CD8-positive, alpha-beta T cell (primary cell): ENCODE measurements at regions of chr7 and their contacts with region 1.

Region 1: DNA sequence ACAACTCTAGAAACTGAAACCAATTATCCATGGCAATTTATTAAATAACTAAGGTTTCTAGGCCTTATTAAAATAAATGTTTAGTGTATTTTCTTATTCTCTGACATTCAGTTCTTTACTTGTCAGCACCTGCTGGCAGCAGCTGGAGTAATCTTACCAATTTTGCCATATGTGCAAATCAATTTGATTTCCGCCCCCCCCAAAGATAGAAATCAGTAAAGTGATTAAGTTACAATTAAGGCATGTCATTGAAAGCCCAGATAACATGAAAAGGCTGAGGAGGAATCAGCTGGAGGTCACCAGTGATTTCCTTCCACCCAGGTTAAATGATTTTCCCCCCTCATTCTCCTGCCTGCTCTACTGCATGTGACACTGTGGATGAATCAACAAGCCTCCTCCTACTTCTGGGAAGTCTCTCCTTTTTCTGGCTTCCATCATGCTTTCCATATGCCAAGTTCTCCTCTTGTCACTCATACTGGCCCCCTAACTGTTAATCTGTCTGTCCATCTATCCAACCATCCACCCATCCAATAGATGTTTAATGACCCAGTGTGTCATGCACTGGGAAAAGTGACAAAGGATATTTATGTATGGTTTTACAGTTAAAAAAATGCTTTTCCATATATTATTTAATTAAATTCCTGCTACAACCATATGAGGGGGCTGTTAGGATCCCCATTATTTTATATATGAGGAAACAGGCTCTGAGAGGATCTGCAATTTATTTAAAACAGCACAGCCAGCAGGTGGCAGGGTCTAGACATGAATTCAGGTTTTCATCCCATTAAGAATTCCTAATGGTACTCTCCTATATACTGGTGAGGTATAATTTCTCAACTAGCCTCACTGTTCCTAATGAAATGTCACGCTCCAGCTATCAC is 116.5 kb downstream of the ATXN7L1 start:
- DNase-seq: peak in 4 of 9 experiments; percentile 23 to 59 (median 39)
- ATAC-seq: peak; percentile 25
- H3K4me3 ChIP-seq: no peak overlapping the region
- H3K4me3 Mint-ChIP-seq: no peak overlapping the region
- H3K27ac ChIP-seq: no peak overlapping the region
- H3K27ac Mint-ChIP-seq: peak overlapping the region; percentile 70
- H3K4me1 ChIP-seq: peaks cover 30% of the 10 kb centered on the region
- H3K4me1 Mint-ChIP-seq: peaks cover 43% of the 10 kb centered on the region
- H3K27me3 ChIP-seq: no peaks in the 10 kb centered on the region
- H3K27me3 Mint-ChIP-seq: no peaks in the 10 kb centered on the region
- CTCF ChIP-seq: peak; percentile 30

Region 2: GRCh38 chr7:105769901-105770628 is 10.2 kb after region 1 on chr7:
- CTCF ChIA-PET with region 1: interaction called, 13 read pairs
- POLR2A ChIA-PET with region 1: no interaction called
- intact Hi-C with region 1: no loop called
- DNase-seq: no peak
- ATAC-seq: no peak
- H3K4me3 ChIP-seq: no peak overlapping the region
- H3K4me3 Mint-ChIP-seq: no peak overlapping the region
- H3K27ac ChIP-seq: no peak overlapping the region
- H3K27ac Mint-ChIP-seq: no peak overlapping the region
- H3K4me1 ChIP-seq: no peaks in the 10 kb centered on the region
- H3K4me1 Mint-ChIP-seq: no peaks in the 10 kb centered on the region
- H3K27me3 ChIP-seq: no peaks in the 10 kb centered on the region
- H3K27me3 Mint-ChIP-seq: no peaks in the 10 kb centered on the region
- CTCF ChIP-seq: no peak

Region 3: DNA sequence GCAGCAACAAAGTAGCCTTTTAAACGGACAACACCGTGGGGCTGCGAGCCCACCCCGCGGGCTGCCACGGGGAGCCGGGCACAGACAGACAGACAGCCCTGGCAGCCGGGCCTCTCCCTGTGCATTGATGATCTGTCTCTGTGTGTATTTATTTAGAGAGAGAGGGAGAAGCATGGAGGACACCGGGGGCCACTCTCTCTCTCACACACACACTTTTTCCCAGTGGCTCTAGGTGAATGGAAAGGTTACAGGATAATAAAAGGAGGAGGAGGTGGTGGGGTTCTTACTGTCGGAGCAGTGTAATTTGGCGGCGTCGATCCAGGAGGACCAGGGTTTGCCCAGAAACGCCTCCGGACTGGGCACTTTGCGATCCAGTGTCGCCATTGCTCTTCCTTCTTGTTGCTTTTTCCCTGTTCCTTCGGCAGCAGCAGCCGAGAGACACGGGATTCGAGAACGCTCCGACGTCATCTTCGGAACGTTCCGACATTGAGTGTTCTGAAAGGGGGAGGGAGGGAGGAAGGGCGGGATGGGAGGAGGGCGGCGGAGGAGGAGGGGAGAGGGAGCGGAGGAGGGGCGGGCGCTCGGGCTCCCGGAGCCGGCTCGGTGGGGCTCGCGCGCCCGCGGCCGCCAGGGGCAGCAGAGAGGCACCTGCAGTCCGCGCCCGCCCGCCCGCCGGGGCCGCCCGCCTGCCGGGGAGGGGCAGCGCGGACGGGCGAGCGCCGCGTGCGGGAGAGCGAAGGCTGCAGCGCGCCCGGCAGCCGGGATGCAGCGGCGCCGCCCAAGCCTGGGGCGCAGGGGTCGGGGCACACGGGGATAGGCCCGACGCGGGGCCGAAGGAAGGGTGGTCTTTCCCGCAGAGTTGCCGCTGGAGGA is 116.4 kb after region 1 on chr7 and contains the start of gene ATXN7L1:
- CTCF ChIA-PET with region 1: interaction called, 18 read pairs
- POLR2A ChIA-PET with region 1: interaction called, 5 read pairs
- intact Hi-C with region 1: loop called (anchors 1 to 5 kb)
- DNase-seq: peak; percentile 81 to 94 (median 89)
- ATAC-seq: peak; percentile 94
- H3K4me3 ChIP-seq: peak within 1 kb of the TSS; percentile 76 to 98
- H3K4me3 Mint-ChIP-seq: peak within 1 kb of the TSS; percentile 97
- H3K27ac ChIP-seq: peak within 1 kb of the TSS; percentile 53 to 78
- H3K27ac Mint-ChIP-seq: peak within 1 kb of the TSS; percentile 96
- H3K4me1 ChIP-seq: peaks cover 37% of the 10 kb centered on the region
- H3K4me1 Mint-ChIP-seq: peaks cover 61% of the 10 kb centered on the region
- H3K27me3 ChIP-seq: no peaks in the 10 kb centered on the region
- H3K27me3 Mint-ChIP-seq: no peaks in the 10 kb centered on the region
- CTCF ChIP-seq: peak; percentile 29
- total RNA-seq, gene ATXN7L1: 17.0 to 18.5 TPM

Region 4: DNA sequence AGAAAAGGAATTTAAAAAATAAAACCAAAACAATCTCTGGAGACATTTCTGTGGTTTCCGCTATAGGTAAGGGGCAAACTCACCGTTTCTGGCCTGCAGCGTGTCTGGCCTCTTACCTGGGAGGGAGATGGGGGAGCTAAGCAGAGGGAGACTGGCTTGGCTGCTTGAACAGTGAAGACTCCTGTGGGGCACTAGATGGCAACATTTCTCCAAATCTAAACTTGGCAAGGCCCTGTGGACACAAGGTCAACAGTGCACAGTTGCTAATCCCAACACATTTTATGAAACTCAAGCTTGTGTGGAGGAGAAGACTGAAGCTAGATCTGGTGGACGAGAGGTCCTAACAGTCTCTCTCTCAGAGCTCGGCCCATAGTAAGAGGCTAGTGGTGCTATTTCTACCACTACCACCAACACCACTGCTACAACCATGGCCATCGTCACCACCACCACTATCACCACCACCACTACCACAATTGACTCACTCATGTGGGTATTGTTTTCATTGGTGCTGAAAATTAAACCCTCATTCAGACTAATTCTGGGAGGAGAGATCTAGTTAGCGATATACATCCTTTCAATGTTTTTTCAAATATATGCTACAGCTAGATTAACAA is 174.8 kb after region 1 on chr7:
- CTCF ChIA-PET with region 1: interaction called, 10 read pairs
- POLR2A ChIA-PET with region 1: no interaction called
- intact Hi-C with region 1: no loop called
- DNase-seq: peak in 2 of 9 experiments; percentile 11 to 49
- ATAC-seq: no peak
- H3K4me3 ChIP-seq: no peak overlapping the region
- H3K4me3 Mint-ChIP-seq: no peak overlapping the region
- H3K27ac ChIP-seq: no peak overlapping the region
- H3K27ac Mint-ChIP-seq: no peak overlapping the region
- H3K4me1 ChIP-seq: no peaks in the 10 kb centered on the region
- H3K4me1 Mint-ChIP-seq: peaks cover 8% of the 10 kb centered on the region
- H3K27me3 ChIP-seq: no peaks in the 10 kb centered on the region
- H3K27me3 Mint-ChIP-seq: no peaks in the 10 kb centered on the region
- CTCF ChIP-seq: no peak

Region 5: GRCh38 chr7:106041140-106041717 is 281.3 kb after region 1 on chr7:
- CTCF ChIA-PET with region 1: interaction called, 162 read pairs
- POLR2A ChIA-PET with region 1: interaction called, 3 read pairs
- intact Hi-C with region 1: loop called (anchors 1 kb)
- DNase-seq: peak in 3 of 9 experiments; percentile 40 to 59 (median 51)
- ATAC-seq: peak; percentile 32
- H3K4me3 ChIP-seq: no peak overlapping the region
- H3K4me3 Mint-ChIP-seq: peak overlapping the region; percentile 6
- H3K27ac ChIP-seq: no peak overlapping the region
- H3K27ac Mint-ChIP-seq: peak overlapping the region; percentile 68
- H3K4me1 ChIP-seq: peaks cover 28% of the 10 kb centered on the region
- H3K4me1 Mint-ChIP-seq: peaks cover 39% of the 10 kb centered on the region
- H3K27me3 ChIP-seq: no peaks in the 10 kb centered on the region
- H3K27me3 Mint-ChIP-seq: no peaks in the 10 kb centered on the region
- CTCF ChIP-seq: peak; percentile 61